Heart right ventricle (tissue), 16 donors: ENCODE measurements at regions of chr22 and their contacts with region 1.

Region 1: DNA sequence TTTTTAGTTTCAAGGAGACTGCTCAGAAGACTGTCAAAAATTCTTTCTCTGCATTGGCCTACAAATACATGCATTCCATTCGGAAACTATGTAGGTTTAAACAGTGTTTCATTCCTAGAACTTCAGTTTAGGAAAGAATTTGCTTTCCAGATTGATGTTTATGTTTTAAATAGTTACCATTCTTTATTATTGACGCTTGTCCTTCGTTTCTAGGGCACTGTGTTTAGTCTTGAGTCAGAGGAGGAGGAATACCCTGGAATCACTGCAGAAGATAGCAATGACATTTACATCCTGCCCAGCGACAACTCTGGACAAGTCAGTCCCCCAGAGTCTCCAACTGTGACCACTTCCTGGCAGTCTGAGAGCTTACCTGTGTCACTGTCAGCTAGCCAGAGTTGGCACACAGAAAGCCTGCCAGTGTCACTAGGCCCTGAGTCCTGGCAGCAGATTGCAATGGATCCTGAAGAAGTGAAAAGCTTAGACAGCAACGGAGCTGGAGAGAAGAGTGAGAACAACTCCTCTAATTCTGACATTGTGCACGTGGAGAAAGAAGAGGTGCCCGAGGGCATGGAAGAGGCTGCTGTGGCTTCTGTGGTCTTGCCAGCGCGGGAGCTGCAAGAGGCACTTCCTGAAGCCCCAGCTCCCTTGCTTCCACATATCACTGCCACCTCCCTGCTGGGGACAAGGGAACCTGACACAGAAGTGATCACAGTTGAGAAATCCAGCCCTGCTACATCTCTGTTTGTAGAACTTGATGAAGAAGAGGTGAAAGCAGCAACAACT is 47.6 kb downstream of the BID start:
- DNase-seq: no peak
- ATAC-seq: peak in 5 of 8 donors; percentile 10 to 68 (median 33)
- H3K4me3 ChIP-seq: no peak overlapping the region
- H3K27ac ChIP-seq: peak overlapping the region in 9 of 10 donors; percentile 38 to 85 (median 78)
- H3K4me1 ChIP-seq: peaks cover 6 to 53% (median 24%) of the 10 kb centered on the region in 9 donors
- H3K27me3 ChIP-seq: no peaks in the 10 kb centered on the region
- CTCF ChIP-seq: no peak

Region 2: DNA sequence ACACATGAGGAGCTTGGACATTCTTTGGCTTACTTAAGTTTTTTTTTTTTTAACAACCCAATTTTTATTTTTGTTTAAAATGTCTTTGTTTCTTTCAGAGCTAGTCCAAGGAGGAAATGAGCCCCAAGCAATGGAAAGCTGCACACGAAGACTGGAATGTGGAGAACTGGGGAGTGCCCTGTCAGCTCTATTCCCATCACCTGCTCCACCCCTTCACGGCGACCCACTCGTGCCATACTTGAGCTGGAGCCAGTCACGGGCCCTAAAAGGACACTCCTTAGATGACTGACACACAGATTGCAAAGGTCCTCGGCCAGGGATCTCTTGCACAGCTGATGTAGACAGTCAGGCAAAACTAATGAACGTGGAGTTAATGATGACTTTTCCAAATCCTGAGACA is 173.9 kb before region 1 on chr22:
- intact Hi-C with region 1: loop called in 1 of 10 experiments (anchors 10 kb)
- DNase-seq: peak in 1 of 2 donors; percentile 39
- ATAC-seq: peak in 7 of 8 donors; percentile 38 to 81 (median 58)
- H3K4me3 ChIP-seq: no peak overlapping the region
- H3K27ac ChIP-seq: peak overlapping the region in 1 of 10 donors; percentile 12
- H3K4me1 ChIP-seq: no peaks in the 10 kb centered on the region
- H3K27me3 ChIP-seq: no peaks in the 10 kb centered on the region
- CTCF ChIP-seq: no peak

Region 3: DNA sequence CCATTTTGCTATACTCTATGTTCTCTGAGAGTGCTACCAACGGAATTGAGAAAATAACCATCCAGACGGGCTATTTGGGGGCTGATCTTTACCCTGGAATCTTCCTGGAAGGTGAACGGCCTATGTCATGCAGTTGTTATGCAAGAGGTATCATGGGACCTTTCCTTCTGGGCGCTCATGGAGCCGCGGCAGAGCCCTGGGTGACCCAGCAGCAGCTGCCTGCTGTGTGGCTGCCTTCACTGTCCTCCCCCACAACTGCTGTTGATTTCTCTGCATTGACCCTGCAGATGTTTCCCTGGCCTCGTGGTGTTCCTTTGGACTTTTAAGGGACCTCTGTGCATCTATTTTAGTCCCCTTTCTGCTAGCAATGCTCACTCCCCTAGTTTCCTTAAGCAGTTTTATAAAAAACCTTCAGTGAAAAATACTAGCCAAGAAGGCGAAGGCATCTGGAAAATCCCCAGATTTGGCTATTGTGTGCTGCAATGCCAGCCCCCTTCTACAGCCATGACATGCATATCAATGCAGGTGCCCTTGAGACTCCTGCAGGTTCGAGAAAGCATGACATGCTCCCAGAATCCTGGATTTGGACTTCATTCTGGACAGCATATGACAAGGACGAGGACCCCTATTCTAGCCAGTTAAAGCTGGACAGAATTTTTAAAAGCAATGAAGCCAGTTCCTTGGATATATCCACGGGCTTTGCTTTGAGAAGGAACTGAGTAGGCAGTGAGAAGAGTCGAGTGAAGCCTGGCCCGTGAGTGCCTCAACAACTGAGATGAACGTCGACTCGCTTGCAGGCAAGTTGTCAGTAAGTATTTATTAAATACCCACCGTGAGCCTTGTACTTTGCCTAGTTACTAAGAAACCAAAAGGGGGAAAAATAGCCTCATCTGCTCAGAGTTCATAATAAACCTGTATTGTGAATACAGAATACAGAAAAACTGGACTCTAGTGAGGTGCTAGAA is 163.5 kb before region 1 on chr22 and contains the start of gene SLC25A18:
- intact Hi-C with region 1: loop called in 3 of 10 experiments (anchors 10 kb)
- DNase-seq: peak; percentile 50 to 64
- ATAC-seq: peak; percentile 78 to 94 (median 92)
- H3K4me3 ChIP-seq: peak within 1 kb of the TSS in 5 of 10 donors; percentile 1 to 23 (median 5)
- H3K27ac ChIP-seq: peak within 1 kb of the TSS; percentile 55 to 88 (median 82)
- H3K4me1 ChIP-seq: peaks cover 9 to 33% (median 21%) of the 10 kb centered on the region in 9 donors
- H3K27me3 ChIP-seq: no peaks in the 10 kb centered on the region
- CTCF ChIP-seq: peak in 2 of 9 donors; percentile 4 to 14
- total RNA-seq, gene SLC25A18: 0.65 to 13.6 (median 0.87) TPM

Region 4: GRCh38 chr22:17647991-17648390 is 78.7 kb before region 1 on chr22:
- intact Hi-C with region 1: no loop called
- DNase-seq: no peak
- ATAC-seq: no peak
- H3K4me3 ChIP-seq: no peak overlapping the region
- H3K27ac ChIP-seq: no peak overlapping the region
- H3K4me1 ChIP-seq: peaks cover 0 to 22% (median 0%) of the 10 kb centered on the region in 9 donors
- H3K27me3 ChIP-seq: no peaks in the 10 kb centered on the region
- CTCF ChIP-seq: no peak